ENCODE measurements at regions of chr9 and their contacts with region 1.

Region 1: GRCh38 chr9:113578882-113579282 is 115.4 kb downstream of the RGS3 start:
- DNase-seq: peak; percentile 96
- H3K4me3 Mint-ChIP-seq: peak overlapping the region; percentile 80
- H3K27ac Mint-ChIP-seq: peak overlapping the region; percentile 93
- H3K4me1 Mint-ChIP-seq: peaks cover 77% of the 10 kb centered on the region
- H3K27me3 Mint-ChIP-seq: no peaks in the 10 kb centered on the region

Region 2: GRCh38 chr9:113523421-113524236 is 55.3 kb before region 1 on chr9:
- intact Hi-C with region 1: loop called (anchors 1 kb)
- DNase-seq: peak; percentile 84
- H3K4me3 Mint-ChIP-seq: peak overlapping the region; percentile 79
- H3K27ac Mint-ChIP-seq: peak overlapping the region; percentile 81
- H3K4me1 Mint-ChIP-seq: peaks cover 72% of the 10 kb centered on the region
- H3K27me3 Mint-ChIP-seq: no peaks in the 10 kb centered on the region

Region 3: DNA sequence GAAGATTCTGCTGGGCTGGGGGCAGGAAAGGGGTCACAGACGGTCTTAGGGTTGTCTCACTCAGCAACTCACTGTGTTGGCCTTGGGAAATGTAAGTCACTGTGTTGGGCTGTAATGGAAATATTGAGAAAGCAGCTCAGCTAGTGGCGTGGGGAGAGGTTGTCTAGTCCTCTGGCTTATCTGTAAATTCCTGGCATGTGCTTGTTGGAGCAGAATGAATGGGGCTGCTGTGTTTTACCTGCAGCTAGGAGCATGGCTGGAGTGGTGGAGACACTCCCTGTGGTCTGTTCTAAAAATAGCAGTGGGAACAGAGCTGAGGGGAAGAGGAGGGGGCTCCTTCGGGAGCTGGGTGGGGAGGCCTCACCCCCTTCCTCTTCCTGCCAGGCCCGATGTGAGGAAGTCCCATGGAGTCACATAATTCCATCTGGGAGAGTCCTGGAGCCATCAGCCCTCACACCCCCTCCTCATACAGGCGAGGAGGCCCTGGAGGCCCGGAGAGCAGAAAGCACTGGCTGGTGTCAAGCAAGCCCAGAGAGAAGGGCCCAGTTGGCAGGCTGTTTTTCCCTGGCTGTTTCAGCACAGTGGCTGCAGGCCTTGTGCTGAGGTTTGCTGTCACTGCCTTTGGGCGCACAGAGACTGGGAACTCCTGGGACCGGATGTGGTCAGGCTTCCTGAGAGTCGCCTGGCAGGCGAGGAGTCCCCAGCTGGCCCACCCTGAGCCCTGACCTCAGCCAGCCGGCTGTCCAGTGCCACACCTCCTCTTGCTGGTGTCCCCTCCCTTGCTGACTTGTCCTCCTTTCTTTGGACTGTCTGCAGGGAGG is 30.5 kb before region 1 on chr9:
- intact Hi-C with region 1: loop called (anchors 2 kb)
- DNase-seq: no peak
- H3K4me3 Mint-ChIP-seq: peak overlapping the region; percentile 62
- H3K27ac Mint-ChIP-seq: peak overlapping the region; percentile 92
- H3K4me1 Mint-ChIP-seq: peaks cover 33% of the 10 kb centered on the region
- H3K27me3 Mint-ChIP-seq: no peaks in the 10 kb centered on the region

Region 4: DNA sequence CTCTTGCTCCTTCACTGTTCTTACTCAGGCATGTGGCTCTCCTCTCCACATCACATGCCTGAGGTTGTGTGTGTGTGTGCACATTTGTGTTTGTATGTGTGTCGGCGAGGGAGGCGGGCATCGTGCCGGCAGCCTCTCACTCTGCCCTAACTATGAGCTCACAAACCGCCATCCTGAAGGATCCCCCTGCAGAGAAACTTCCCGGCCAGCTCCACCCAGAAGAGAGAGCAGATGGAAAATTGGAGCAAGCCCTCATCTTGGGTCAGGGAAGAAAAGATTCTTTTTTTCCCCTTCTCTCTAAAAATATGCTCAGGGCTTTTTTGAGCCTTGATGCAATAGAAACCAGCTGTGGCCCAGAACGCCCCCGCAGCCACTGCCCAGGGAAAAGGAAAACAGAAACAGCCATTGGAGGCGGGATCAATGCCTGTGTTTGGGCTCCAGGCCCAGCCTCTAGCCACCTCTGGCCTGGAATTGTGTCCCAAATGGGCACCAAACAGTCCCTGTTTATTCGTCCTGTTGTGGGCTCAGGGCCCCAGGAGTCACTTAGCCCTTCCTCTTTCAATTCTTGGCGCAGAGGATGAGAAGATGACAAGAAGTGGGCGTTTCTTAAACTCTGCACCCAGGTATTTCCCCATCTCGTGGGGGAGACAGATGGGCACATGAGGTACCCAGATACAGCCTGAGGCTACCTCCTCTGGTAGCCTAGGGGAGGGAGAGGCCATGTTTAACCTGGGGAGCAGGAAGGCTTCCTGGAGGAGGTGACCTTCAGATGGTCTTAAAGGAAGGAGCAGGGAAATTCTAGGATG is 36.2 kb after region 1 on chr9:
- intact Hi-C with region 1: loop called (anchors 2 kb)
- DNase-seq: no peak
- H3K4me3 Mint-ChIP-seq: peak overlapping the region; percentile 70
- H3K27ac Mint-ChIP-seq: peak overlapping the region; percentile 95
- H3K4me1 Mint-ChIP-seq: peaks cover 46% of the 10 kb centered on the region
- H3K27me3 Mint-ChIP-seq: no peaks in the 10 kb centered on the region

Region 5: DNA sequence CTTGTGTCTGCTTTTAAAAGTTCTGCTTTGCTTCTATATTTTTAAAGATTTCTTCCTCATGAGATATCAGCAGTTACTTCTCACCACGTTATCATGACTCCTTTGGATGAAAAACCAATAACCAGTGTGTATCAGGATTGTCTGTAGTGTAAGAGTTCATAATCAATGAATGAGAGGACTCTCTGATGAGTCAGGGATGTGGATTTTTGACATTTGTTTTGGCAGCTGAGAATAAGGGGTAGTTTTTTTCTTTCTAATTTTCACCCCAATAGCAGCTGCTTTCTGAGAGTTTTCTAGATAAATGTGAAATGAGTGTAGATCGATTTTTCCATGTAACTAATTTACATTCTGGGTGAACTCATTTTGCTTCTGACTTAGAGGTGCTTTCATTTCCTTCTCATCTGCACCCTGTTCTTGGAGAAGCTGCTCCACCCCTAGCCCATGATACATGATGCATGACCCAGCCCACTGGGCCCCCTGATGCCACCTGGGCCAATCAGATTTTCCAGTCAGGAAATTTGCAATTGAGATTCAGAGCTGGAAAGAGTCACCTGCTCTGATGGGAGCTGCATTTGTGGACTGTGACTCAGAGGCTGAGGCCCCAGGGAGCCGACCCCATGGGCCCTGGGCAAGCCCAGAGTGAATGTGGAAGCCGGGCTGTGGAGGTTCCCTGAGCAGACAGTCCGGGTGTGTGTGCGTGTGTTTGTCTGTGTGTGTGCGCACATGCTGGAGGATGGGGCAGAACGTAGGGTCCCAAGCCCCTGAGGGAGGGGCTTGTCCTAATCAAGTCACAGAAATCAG is 43.9 kb after region 1 on chr9:
- intact Hi-C with region 1: loop called (anchors 1 kb)
- DNase-seq: peak; percentile 78
- H3K4me3 Mint-ChIP-seq: peak overlapping the region; percentile 52
- H3K27ac Mint-ChIP-seq: peak overlapping the region; percentile 96
- H3K4me1 Mint-ChIP-seq: peaks cover 44% of the 10 kb centered on the region
- H3K27me3 Mint-ChIP-seq: no peaks in the 10 kb centered on the region